ENCODE measurements at regions of chr21 and their contacts with region 1.

Region 1: DNA sequence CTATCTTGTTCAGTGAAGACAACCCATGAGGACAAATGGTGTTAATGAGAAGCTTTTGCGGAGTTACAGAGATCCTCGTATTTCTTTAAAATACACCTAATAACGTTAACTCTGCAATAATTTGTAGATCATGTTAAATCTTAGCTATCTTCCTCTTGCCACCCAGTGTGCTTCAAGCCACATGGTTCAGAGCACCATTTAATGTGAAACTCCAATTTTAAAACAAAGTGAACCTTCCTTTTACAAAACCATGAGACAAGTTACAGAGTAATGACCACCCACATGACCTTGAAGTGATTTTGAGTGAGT is 1.7 kb upstream of the KCNE2 start:
- DNase-seq: no peak
- H3K4me3 Mint-ChIP-seq: no peak overlapping the region
- H3K27ac Mint-ChIP-seq: no peak overlapping the region
- H3K4me1 Mint-ChIP-seq: peaks cover 5% of the 10 kb centered on the region
- H3K27me3 Mint-ChIP-seq: peaks cover 4% of the 10 kb centered on the region

Region 2: GRCh38 chr21:33843216-33843615 is 518.9 kb before region 1 on chr21:
- CTCF ChIA-PET with region 1: no interaction called
- intact Hi-C with region 1: no loop called
- DNase-seq: no peak
- H3K4me3 Mint-ChIP-seq: no peak overlapping the region
- H3K27ac Mint-ChIP-seq: no peak overlapping the region
- H3K4me1 Mint-ChIP-seq: no peaks in the 10 kb centered on the region
- H3K27me3 Mint-ChIP-seq: no peaks in the 10 kb centered on the region

Region 3: DNA sequence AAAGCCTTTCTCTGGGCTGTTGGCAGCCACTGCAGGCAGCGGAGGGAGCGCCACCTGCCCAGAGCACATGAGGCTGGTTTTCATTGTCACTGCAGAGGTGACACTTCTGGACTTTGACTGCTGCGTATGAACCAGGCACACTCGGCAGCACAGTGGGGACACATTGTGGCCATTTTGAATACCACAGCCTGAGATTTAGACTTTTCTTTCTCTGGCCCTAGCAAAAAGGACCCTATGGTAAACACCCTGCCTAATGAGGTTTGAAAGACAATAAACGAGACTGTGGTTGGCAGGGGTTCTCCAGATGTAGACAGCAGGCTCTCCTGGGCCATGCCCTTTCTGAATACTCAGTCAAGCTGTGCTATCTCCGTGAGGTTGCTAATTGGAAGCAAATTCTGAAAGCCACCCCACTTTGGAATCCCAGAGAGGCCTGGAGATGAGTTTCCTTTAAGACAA is 10.3 kb before region 1 on chr21:
- CTCF ChIA-PET with region 1: interaction called, 22 read pairs
- intact Hi-C with region 1: no loop called
- DNase-seq: peak; percentile 45
- H3K4me3 Mint-ChIP-seq: no peak overlapping the region
- H3K27ac Mint-ChIP-seq: no peak overlapping the region
- H3K4me1 Mint-ChIP-seq: peaks cover 3% of the 10 kb centered on the region
- H3K27me3 Mint-ChIP-seq: peaks cover 3% of the 10 kb centered on the region

Region 4: DNA sequence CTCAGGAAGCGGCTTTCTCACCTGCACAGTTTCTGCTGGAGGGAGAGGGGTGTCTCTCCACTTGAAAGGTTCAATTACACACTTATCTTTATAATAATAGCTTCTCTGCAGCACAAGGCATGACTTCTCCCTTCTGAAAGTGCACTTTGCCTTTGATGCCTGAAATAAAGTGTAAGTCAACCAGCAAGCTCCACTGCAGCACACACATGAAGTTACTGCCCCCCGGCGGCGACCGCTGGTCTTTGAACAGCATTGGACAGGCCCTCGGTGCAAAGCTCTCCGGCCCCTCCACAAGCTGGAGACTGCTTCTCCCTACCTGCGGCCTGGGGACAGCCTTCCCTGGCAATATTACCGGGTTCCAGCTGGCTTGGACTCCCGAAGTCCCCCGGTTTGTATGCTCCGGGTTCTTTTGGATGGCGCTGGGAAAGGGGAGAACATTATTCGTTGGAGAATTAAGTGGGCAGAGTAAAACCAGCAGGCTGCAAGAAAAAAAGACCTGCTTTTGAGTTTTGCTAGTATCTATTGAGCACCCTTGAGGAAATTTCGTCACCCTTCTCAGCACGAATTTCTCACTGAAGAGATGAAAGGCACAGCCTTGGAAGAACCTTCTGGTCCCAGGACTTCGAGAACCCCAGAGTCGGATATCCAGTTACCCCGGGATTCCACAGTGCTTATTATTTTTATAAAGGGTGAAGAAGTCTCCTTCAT is 241.1 kb after region 1 on chr21:
- CTCF ChIA-PET with region 1: interaction called, 9 read pairs
- intact Hi-C with region 1: loop called (anchors 1 kb)
- DNase-seq: peak; percentile 78
- H3K4me3 Mint-ChIP-seq: no peak overlapping the region
- H3K27ac Mint-ChIP-seq: no peak overlapping the region
- H3K4me1 Mint-ChIP-seq: peaks cover 2% of the 10 kb centered on the region
- H3K27me3 Mint-ChIP-seq: no peaks in the 10 kb centered on the region

Region 5: DNA sequence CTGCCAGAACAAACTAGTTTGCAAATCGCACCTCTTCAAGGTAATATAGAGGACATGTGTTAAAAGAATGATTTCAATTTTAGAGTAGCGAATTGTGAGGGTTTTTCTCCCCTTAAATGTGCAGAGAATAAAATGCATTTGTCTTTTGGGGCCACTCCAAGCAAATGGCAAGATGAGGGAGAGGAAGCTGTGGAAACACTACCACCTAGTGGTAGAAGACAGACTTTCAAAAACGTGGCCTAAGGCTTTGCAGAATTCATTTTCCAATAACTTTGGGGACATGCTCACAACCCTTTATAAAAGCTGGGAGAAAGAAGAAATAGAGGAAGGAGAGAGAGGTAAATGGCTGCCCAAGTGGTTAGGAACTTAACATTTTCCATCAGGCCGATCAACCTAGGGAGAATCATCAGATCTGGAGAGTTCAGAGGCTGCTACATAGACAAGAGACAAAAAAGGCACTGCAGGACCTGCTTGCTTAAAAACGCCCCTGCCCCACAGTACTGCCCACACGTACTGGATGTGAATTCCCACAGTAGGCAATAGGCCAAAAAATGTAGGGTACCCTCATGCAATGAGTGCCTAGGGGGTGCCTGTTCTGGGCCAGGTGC is 268.6 kb after region 1 on chr21:
- CTCF ChIA-PET with region 1: interaction called, 8 read pairs
- intact Hi-C with region 1: loop called (anchors 1 kb)
- DNase-seq: peak; percentile 43
- H3K4me3 Mint-ChIP-seq: no peak overlapping the region
- H3K27ac Mint-ChIP-seq: no peak overlapping the region
- H3K4me1 Mint-ChIP-seq: no peaks in the 10 kb centered on the region
- H3K27me3 Mint-ChIP-seq: peaks cover 7% of the 10 kb centered on the region

Region 6: DNA sequence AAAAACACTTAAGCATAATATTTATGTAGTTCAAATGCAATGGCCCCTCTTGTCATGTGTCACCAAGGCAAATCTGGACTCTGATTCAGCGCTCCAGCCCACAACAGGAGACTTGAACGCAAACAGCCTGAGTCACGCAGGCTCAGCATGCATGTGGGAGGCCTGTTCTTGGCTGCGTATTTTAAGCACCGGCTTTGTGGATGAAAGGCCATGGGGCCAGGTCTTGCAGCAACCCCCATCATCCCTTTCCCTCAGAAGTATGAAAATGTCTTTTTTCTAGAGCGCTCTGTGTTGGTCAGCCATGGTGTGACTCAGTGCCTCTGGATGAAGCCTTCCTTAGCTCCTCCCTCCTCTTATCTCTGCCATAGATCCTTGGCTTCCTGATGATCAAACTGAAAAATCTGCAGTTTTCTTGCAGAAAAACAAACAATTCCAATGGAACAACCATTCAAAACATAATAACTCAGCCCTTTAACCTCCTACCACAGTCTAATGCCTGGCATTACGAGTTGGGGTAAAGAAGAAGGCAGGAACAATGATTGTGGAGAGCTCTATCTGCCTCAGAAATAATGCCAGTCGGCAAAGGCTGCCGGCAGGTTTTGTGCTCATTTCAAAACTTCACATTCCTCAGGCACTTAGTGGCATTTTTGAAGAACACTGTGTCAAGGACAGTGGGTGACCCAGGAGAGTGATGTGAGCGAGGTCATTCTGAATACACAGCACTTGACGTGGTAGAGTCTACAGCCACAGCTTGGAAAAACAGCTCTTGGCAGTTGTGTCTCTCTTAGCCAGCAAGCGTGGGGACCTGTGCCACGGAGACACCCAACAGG is 474.2 kb after region 1 on chr21:
- CTCF ChIA-PET with region 1: no interaction called
- intact Hi-C with region 1: no loop called
- DNase-seq: peak; percentile 57
- H3K4me3 Mint-ChIP-seq: no peak overlapping the region
- H3K27ac Mint-ChIP-seq: peak overlapping the region; percentile 67
- H3K4me1 Mint-ChIP-seq: peaks cover 50% of the 10 kb centered on the region
- H3K27me3 Mint-ChIP-seq: no peaks in the 10 kb centered on the region